ENCODE measurements at regions of chrX and their contacts with region 1.

Region 1: GRCh38 chrX:30713061-30713525 is 59.9 kb downstream of the GK start:
- DNase-seq: peak; percentile 51
- H3K4me3 ChIP-seq: no peak overlapping the region
- H3K27ac ChIP-seq: no peak overlapping the region
- H3K4me1 ChIP-seq: no peaks in the 10 kb centered on the region
- H3K27me3 ChIP-seq: no peaks in the 10 kb centered on the region
- CTCF ChIP-seq: peak; percentile 82
- EP300 ChIP-seq: no peak
- RAD21 ChIP-seq: peak; percentile 84

Region 2: DNA sequence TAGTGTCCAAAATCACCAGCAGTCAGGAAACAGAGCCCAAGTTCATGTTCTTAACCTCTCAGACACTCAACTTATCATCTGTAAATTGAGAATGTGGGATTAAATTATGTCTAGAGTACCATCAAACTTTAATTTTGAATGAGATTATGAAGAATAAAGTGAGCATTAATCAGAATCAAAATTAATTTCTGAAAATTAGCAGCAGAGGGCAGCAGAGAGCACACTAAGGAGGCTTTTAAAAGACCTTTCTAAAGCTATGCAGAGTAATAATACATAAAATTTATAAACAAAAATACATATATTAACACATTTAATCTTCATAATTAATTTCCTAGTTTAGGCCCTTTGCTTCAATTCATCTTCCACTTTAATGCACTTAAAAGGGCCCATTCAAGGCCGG is 142.6 kb before region 1 on chrX:
- CTCF ChIA-PET with region 1: interaction called, 18 read pairs
- POLR2A ChIA-PET with region 1: no interaction called
- DNase-seq: peak; percentile 15
- H3K4me3 ChIP-seq: no peak overlapping the region
- H3K27ac ChIP-seq: no peak overlapping the region
- H3K4me1 ChIP-seq: no peaks in the 10 kb centered on the region; a peak in 1 of 4 replicates
- H3K27me3 ChIP-seq: peaks cover 5% of the 10 kb centered on the region; the same call in 1 of the 2 replicates
- CTCF ChIP-seq: peak; percentile 66
- EP300 ChIP-seq: no peak
- RAD21 ChIP-seq: peak; percentile 53

Region 3: DNA sequence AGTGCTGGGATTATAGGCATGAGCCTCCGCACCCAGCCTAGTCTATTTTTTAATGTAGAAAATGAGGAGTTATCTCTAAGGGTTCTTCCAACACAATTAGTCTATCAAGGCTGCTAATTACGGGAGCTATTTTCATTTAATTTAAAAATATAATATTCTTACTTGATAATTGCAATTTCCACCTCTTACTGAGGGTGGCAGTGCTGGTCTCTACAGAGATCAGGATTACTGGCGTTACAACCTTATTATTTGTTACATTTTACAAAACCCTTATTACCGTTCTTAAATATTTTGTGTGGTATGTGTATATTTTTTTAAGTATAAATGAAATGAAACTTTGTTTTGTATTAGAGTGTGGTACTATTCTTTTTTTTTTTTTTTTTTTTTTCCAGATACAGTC is 77.5 kb before region 1 on chrX:
- CTCF ChIA-PET with region 1: interaction called, 13 read pairs
- POLR2A ChIA-PET with region 1: no interaction called
- DNase-seq: peak; percentile 37
- H3K4me3 ChIP-seq: no peak overlapping the region
- H3K27ac ChIP-seq: no peak overlapping the region
- H3K4me1 ChIP-seq: no peaks in the 10 kb centered on the region
- H3K27me3 ChIP-seq: no peaks in the 10 kb centered on the region
- CTCF ChIP-seq: peak; percentile 42
- EP300 ChIP-seq: no peak
- RAD21 ChIP-seq: peak; percentile 65

Region 4: DNA sequence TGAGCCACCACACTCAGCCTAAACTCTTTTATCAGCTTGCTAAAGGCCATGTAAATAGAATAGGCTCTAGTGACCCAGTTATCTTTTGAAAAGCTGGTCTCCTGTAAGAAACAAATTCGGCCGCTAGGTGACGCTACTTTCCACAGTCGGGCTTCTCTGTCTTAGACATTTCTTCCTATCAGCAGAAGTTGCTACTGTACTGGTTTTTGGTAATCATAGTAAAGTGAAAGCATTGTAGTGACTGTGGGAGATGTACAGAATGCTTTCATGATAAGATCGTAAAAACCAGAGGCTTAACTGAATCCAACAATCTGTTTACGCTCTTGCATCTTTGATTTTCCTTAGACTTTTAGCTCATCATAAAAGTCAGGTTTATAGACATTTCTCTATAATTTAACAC is 22.7 kb after region 1 on chrX:
- CTCF ChIA-PET with region 1: interaction called, 11 read pairs
- POLR2A ChIA-PET with region 1: no interaction called
- DNase-seq: peak; percentile 45
- H3K4me3 ChIP-seq: no peak overlapping the region; a peak in 1 of 4 replicates
- H3K27ac ChIP-seq: no peak overlapping the region
- H3K4me1 ChIP-seq: no peaks in the 10 kb centered on the region
- H3K27me3 ChIP-seq: no peaks in the 10 kb centered on the region; the same call in 1 of the 2 replicates
- CTCF ChIP-seq: peak; percentile 88
- EP300 ChIP-seq: no peak
- RAD21 ChIP-seq: peak; percentile 75